ENCODE measurements at regions of chr18 and their contacts with region 1.

Region 1: GRCh38 chr18:79507076-79507545 is 111.4 kb downstream of the NFATC1 start:
- DNase-seq: peak; percentile 85 to 88
- ATAC-seq: peak; percentile 92
- H3K4me3 ChIP-seq: no peak overlapping the region
- H3K27ac ChIP-seq: peak overlapping the region; percentile 34 to 42
- H3K4me1 ChIP-seq: no peaks in the 10 kb centered on the region
- H3K27me3 ChIP-seq: no peaks in the 10 kb centered on the region

Region 2: DNA sequence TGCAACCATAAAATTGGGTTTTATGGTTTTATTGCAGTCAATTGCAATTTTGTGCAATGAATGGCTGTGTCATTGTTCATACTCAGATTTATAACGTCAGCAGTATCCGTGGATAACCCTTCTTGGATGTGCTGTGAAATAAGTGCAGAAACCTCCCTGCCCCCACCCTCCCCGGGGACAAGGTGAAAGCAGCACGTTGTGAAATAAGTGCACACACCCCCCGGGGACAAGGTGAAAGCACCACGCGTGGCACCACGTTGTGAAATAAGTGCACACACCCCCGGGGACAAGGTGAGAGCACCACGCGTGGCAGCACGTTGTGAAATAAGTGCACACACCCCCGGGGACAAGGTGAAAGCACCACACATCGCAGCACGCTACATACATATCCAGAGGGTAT is 205.0 kb before region 1 on chr18:
- intact Hi-C with region 1: no loop called
- DNase-seq: no peak
- ATAC-seq: no peak
- H3K4me3 ChIP-seq: no peak overlapping the region
- H3K27ac ChIP-seq: no peak overlapping the region
- H3K4me1 ChIP-seq: no peaks in the 10 kb centered on the region
- H3K27me3 ChIP-seq: no peaks in the 10 kb centered on the region

Region 3: GRCh38 chr18:79400091-79400590 is 107.0 kb before region 1 on chr18:
- intact Hi-C with region 1: loop called (anchors 5 kb)
- DNase-seq: peak; percentile 76 to 91
- ATAC-seq: no peak
- H3K4me3 ChIP-seq: peak overlapping the region; percentile 68 to 74
- H3K27ac ChIP-seq: no peak overlapping the region
- H3K4me1 ChIP-seq: no peaks in the 10 kb centered on the region
- H3K27me3 ChIP-seq: no peaks in the 10 kb centered on the region

Region 4: DNA sequence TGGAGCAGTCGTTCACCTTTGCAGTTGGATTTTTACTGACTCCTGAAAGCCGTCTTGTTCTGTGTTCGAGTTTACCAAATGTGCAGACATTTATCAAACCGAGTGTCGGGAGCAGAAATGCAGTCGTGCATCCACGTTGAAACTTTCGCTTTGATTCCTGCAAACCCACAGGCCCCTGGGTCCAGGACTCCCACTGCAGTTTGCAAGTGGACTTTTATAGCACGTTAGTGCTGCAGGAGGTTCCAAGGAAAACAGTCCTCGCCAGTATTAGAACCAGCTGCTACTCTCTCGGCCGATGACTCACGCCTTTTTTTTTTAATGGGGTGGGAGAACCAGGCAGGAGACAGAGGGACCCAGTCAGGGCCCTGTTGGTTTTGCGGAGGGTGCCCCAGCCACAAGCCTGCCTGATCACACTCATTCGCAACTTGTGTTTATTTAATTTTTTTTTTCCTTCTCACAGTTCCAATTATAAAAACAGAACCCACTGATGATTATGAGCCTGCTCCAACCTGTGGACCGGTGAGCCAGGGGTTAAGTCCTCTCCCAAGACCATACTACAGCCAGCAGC is 21.2 kb before region 1 on chr18:
- intact Hi-C with region 1: loop called in 1 of 2 experiments (anchors 1 kb)
- DNase-seq: peak; percentile 57 to 73
- ATAC-seq: peak; percentile 84
- H3K4me3 ChIP-seq: peak overlapping the region in 1 of 2 donors; percentile 27
- H3K27ac ChIP-seq: no peak overlapping the region
- H3K4me1 ChIP-seq: no peaks in the 10 kb centered on the region
- H3K27me3 ChIP-seq: no peaks in the 10 kb centered on the region

Region 5: GRCh38 chr18:79575891-79576685 is 69.0 kb after region 1 on chr18:
- intact Hi-C with region 1: loop called (anchors 5 to 10 kb)
- DNase-seq: peak; percentile 42 to 64
- ATAC-seq: no peak
- H3K4me3 ChIP-seq: no peak overlapping the region
- H3K27ac ChIP-seq: no peak overlapping the region
- H3K4me1 ChIP-seq: no peaks in the 10 kb centered on the region
- H3K27me3 ChIP-seq: no peaks in the 10 kb centered on the region